Dendritic cell treated with granulocyte-macrophage colony-stimulating factor and Interleukin-4, amounts not matched to agents 40 ng/mL and 50 ng/mL, for 4 days (primary cell): ENCODE measurements at regions of chr3 and their contacts with region 1.

Region 1: GRCh38 chr3:43690400-43691119 is at the start of gene ABHD5:
- H3K4me3 Mint-ChIP-seq: peak within 1 kb of the TSS; percentile 93
- H3K27ac Mint-ChIP-seq: peak within 1 kb of the TSS; percentile 92
- H3K4me1 Mint-ChIP-seq: peaks cover 31% of the 10 kb centered on the region
- H3K27me3 Mint-ChIP-seq: peaks cover 8% of the 10 kb centered on the region

Region 2: DNA sequence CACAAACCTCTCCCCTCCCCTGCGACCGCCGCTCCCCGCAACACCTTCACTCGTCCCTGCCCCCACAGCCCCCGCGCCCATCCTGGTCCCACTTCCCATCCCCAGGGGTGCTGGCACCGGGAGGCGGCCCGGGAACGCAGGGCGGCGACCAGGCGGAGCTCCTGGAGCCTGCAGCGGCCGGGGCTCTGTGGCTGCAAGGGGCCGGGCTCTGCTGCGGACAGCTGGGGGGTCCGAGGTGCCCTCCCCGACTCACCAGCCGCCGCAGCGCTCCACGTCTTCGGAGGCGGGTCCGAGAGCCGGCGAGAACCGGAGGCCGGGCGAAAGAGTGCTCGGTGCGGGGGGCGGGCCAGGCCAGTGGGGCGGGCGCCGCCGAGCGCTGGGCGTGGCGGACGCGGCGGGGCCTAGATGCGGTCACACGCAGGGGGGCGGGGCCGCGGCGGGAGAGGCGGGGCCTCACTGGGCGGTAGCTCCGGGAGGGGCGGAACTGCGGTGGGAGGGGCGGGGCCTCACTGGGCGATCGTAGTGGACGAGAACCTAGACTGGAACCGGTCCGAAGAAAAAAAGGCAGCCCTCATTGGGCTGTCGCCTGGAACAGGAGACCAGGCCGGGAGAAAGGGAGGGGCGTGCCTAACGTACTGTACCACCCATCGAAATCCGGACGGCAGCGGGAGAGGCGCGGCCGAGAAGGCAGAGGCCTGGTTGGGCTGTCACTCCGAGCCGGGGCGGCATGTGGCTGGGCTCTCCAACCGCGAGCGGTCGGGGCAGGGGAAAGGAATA is 68.7 kb before region 1 on chr3 and contains the start of gene ANO10:
- intact Hi-C with region 1: loop called (anchors 1 kb)
- H3K4me3 Mint-ChIP-seq: peak within 1 kb of the TSS; percentile 97
- H3K27ac Mint-ChIP-seq: peak within 1 kb of the TSS; percentile 86
- H3K4me1 Mint-ChIP-seq: peaks cover 33% of the 10 kb centered on the region
- H3K27me3 Mint-ChIP-seq: peaks cover 5% of the 10 kb centered on the region

Region 3: GRCh38 chr3:43638594-43639447 is 51.7 kb before region 1 on chr3:
- intact Hi-C with region 1: no loop called
- H3K4me3 Mint-ChIP-seq: no peak overlapping the region
- H3K27ac Mint-ChIP-seq: no peak overlapping the region
- H3K4me1 Mint-ChIP-seq: peaks cover 27% of the 10 kb centered on the region
- H3K27me3 Mint-ChIP-seq: no peaks in the 10 kb centered on the region

Region 4: DNA sequence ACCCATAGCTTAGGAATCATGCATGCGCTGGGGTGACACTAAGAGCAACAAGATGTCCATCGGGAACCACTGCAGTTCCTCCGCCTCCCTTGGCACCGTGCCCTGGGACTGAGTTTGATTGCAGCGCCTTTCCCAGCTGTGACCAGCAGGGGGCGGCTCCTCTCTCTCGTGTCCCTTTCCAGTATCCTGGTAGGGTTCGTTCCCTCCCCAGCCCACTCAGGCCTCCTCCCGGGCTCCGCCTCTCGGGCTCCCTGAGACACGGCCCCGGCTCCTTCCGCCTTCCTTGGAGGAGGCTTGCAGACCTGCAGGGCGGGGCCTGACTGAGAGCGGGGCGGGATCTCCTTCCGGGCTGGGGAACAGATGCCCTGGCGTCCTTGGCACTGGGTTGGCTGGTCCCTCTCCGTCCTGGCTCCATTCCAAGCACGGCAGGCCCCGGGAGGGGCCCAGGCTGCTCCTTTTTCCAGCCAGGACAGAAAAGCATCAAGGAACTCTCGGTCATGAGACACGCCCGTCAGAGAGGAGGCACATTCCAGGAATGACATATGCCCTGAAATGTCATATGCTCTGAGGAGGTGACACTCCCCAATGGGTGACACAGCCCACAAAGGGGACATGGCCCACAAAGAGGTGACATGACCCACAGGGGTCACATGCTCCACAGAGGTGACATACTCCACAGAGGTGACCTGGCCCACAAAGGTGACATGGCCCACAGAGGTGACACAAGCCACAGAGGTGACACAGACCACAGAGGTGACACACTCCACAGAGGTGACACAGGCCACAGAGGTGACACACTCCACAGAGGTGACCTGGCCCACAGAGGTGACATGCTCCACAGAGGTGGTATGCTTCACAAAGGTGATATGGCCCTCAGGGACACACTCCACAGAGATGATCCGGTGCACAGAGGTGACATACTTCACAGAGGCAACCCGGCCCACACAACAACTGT is 79.2 kb after region 1 on chr3:
- intact Hi-C with region 1: loop called (anchors 5 kb)
- H3K4me3 Mint-ChIP-seq: peak overlapping the region; percentile 57
- H3K27ac Mint-ChIP-seq: peak overlapping the region; percentile 41
- H3K4me1 Mint-ChIP-seq: peaks cover 54% of the 10 kb centered on the region
- H3K27me3 Mint-ChIP-seq: peaks cover 6% of the 10 kb centered on the region

Region 5: GRCh38 chr3:44030687-44031305 is 340.2 kb after region 1 on chr3:
- intact Hi-C with region 1: no loop called
- H3K4me3 Mint-ChIP-seq: no peak overlapping the region
- H3K27ac Mint-ChIP-seq: no peak overlapping the region
- H3K4me1 Mint-ChIP-seq: no peaks in the 10 kb centered on the region
- H3K27me3 Mint-ChIP-seq: peaks cover 36% of the 10 kb centered on the region